HEK293 (cell line): ENCODE measurements at regions of chr6 and their contacts with region 1.

Region 1: DNA sequence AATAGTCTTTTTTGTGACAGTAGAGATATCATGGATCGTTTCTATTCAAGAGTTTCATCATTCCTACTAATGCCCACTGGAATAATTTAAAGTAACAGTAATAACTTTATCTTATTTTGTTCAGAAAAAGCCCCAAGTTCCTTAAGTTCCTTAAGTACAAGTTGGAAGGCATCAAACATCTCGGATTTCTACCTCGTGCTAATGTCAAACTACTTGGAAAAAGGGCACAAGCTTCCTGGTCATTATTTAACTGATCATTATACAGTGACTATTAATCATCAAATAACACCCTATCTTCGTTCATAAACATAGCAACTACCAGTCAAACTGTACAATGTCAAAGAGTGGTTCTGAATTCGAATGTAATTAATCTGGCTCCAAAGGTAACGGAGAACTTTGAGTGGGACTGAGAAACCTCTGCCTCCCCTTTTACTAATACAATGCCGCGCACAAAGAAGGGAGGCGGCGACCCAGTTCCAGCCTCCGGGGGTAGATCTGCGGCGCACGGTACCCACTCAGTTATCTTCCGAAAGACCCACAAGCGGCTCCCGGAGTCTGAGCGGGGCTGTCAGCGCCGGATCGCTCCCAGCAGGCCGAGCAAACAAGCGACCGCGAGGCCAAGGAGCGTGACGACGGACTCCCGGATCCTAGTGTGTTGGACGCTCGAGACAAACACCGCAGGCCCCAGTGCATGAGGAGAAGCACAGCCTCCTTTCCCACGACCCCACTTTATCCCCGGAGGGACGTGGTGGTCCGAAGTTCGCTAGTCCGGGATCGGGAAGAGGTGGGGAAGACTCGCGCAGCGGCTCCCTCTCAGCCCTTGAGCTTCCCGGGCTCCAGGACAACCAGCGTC is 716 bp downstream of the SHPRH start:
- H3K4me3 ChIP-seq: peak overlapping the region; percentile 95
- H3K27ac ChIP-seq: peak overlapping the region; percentile 58; the same call in 1 of the 2 replicates
- H3K4me1 ChIP-seq: no peaks in the 10 kb centered on the region
- CTCF ChIP-seq: no peak

Region 2: DNA sequence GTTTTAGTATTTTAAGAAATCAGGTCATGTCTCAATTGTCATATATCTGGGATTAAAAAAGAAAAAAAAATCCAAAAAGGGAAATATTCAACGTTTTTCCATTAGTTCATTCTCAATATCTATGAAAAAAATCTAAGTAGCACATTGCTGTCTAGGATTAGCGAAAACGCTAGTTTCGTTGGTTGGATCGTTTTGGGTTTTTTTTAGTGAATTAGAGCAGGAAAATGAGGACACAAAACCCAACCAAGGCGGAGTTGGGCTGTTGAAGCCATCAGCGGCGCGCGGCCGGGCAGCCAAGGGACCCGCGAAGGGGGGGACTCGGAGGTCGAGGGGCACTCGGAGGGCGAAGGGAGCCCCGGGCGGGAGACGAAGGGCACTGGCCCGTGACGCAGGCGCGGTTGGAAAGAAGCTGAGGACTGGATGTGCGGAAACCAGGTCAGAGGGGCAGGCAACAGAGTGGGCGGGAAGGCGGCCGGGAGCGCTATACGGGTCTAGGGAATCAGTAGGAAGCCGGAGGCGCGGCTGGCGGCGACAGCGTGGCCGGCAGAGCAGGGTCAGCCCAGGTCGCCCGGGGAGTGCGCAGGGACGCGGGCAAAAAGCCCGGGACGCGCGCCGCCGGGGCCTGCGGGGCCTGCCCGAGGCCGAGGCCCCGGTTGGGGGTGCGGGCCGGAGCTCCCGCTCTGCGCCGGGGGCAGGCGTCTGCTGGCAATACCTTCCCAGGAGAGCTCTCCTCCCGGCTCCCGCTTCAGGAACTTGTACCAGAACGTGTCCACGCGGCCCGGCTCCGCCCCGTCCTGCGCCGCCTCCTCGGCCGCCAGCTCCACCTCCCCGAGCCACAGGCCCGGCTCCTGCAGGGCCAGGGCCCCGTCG is 228.7 kb before region 1 on chr6:
- CTCF ChIA-PET with region 1: no interaction called
- POLR2A ChIA-PET with region 1: interaction called, 12 read pairs
- H3K4me3 ChIP-seq: peak overlapping the region; percentile 55
- H3K27ac ChIP-seq: peak overlapping the region; percentile 96
- H3K4me1 ChIP-seq: peaks cover 4% of the 10 kb centered on the region; the same call in 1 of the 2 replicates
- CTCF ChIP-seq: peak; percentile 26; the same call in 1 of the 2 replicates

Region 3: DNA sequence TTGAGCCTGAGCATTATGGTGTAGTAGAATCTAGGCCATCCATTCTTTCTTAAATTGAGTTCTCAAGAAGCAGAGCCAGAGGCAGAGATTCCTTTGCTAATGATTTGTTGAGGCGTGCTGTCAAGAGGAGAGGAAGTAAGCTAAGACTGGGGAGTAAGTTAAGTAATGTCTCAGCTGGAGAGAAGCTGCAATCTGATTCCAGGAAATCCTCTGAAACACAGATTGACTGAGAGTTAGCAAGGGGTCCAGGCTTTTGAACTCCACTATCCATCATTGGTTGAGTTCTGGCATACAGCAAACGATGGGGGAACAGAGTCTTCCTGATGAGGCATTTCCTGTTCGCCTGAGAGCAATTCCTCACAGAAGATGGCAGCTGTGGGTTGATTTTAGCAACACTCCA is 372.7 kb after region 1 on chr6:
- CTCF ChIA-PET with region 1: no interaction called
- POLR2A ChIA-PET with region 1: no interaction called
- H3K4me3 ChIP-seq: no peak overlapping the region
- H3K27ac ChIP-seq: no peak overlapping the region
- H3K4me1 ChIP-seq: no peaks in the 10 kb centered on the region
- CTCF ChIP-seq: no peak